ENCODE measurements at regions of chr2 and their contacts with region 1.

Region 1: GRCh38 chr2:45922571-45922988 is 271.1 kb downstream of the PRKCE start:
- DNase-seq: no peak
- ATAC-seq: no peak
- H3K4me3 ChIP-seq: no peak overlapping the region
- H3K27ac ChIP-seq: no peak overlapping the region
- H3K4me1 ChIP-seq: peaks cover 22% of the 10 kb centered on the region
- H3K27me3 ChIP-seq: no peaks in the 10 kb centered on the region
- CTCF ChIP-seq: no peak
- EP300 ChIP-seq: no peak
- POLR2A ChIP-seq: no peak
- RAD21 ChIP-seq: no peak

Region 2: GRCh38 chr2:45256867-45257641 is 665.5 kb before region 1 on chr2:
- CTCF ChIA-PET with region 1: no interaction called
- POLR2A ChIA-PET with region 1: no interaction called
- RAD21 ChIA-PET with region 1: no interaction called
- SMC1A ChIA-PET with region 1: no interaction called
- in situ Hi-C with region 1: no loop called
- intact Hi-C with region 1: no loop called
- DNase-seq: no peak
- ATAC-seq: no peak
- H3K4me3 ChIP-seq: no peak overlapping the region
- H3K27ac ChIP-seq: no peak overlapping the region
- H3K4me1 ChIP-seq: no peaks in the 10 kb centered on the region
- H3K27me3 ChIP-seq: no peaks in the 10 kb centered on the region; a peak in 3 of 4 replicates
- CTCF ChIP-seq: no peak
- EP300 ChIP-seq: no peak
- POLR2A ChIP-seq: no peak
- RAD21 ChIP-seq: no peak

Region 3: DNA sequence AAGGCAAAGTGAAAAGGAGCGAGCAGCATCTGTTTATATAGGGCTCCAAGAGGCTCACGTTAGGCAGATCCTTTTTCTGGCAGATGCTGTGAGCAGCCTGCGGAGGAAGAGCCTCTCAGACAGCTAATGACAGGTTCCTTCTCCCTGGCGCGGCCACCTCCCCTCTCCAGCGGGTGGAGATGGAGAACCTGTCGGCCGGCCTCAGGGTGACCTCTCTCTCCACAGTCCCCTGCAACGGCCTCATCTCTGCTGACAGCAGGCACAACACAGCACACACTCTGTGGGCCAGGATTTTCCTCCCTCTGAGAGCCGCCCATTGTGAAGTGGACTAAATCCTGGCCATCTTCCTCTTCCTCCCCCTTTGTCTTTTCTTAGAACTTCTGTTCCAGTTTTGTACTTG is 151.3 kb before region 1 on chr2:
- CTCF ChIA-PET with region 1: no interaction called
- POLR2A ChIA-PET with region 1: no interaction called
- RAD21 ChIA-PET with region 1: no interaction called
- SMC1A ChIA-PET with region 1: no interaction called
- in situ Hi-C with region 1: no loop called
- intact Hi-C with region 1: no loop called
- DNase-seq: no peak
- ATAC-seq: no peak
- H3K4me3 ChIP-seq: no peak overlapping the region
- H3K27ac ChIP-seq: no peak overlapping the region
- H3K4me1 ChIP-seq: no peaks in the 10 kb centered on the region; the same call in 1 of the 2 replicates
- H3K27me3 ChIP-seq: no peaks in the 10 kb centered on the region
- CTCF ChIP-seq: no peak
- EP300 ChIP-seq: no peak
- POLR2A ChIP-seq: no peak
- RAD21 ChIP-seq: no peak

Region 4: GRCh38 chr2:45843136-45843535 is 79.4 kb before region 1 on chr2:
- CTCF ChIA-PET with region 1: interaction called, 7 read pairs
- POLR2A ChIA-PET with region 1: interaction called, 5 read pairs
- RAD21 ChIA-PET with region 1: interaction called, 5 read pairs
- SMC1A ChIA-PET with region 1: interaction called, 17 read pairs
- in situ Hi-C with region 1: no loop called
- intact Hi-C with region 1: no loop called
- DNase-seq: no peak
- ATAC-seq: peak; percentile 76
- H3K4me3 ChIP-seq: peak overlapping the region; percentile 35; the same call in 1 of the 2 replicates
- H3K27ac ChIP-seq: peak overlapping the region; percentile 94
- H3K4me1 ChIP-seq: peaks cover 70% of the 10 kb centered on the region
- H3K27me3 ChIP-seq: no peaks in the 10 kb centered on the region
- CTCF ChIP-seq: no peak
- EP300 ChIP-seq: peak; percentile 91 to 97
- POLR2A ChIP-seq: no peak
- RAD21 ChIP-seq: no peak

Region 5: GRCh38 chr2:45860136-45861121 is 62.2 kb before region 1 on chr2:
- CTCF ChIA-PET with region 1: interaction called, 3 read pairs
- POLR2A ChIA-PET with region 1: interaction called, 3 read pairs
- RAD21 ChIA-PET with region 1: interaction called, 5 read pairs
- SMC1A ChIA-PET with region 1: interaction called, 21 read pairs
- in situ Hi-C with region 1: no loop called
- intact Hi-C with region 1: no loop called
- DNase-seq: no peak
- ATAC-seq: peak; percentile 81
- H3K4me3 ChIP-seq: peak overlapping the region; percentile 60
- H3K27ac ChIP-seq: peak overlapping the region; percentile 76
- H3K4me1 ChIP-seq: peaks cover 28% of the 10 kb centered on the region
- H3K27me3 ChIP-seq: no peaks in the 10 kb centered on the region
- CTCF ChIP-seq: no peak; a peak in 1 of 6 replicates
- EP300 ChIP-seq: peak in 1 of 2 experiments; percentile 21; a peak in 1 of 4 replicates
- POLR2A ChIP-seq: no peak
- RAD21 ChIP-seq: 0 out of 2 replicates have a peak, but pooled peaks have one; percentile 6

Region 6: GRCh38 chr2:45889053-45889452 is 33.5 kb before region 1 on chr2:
- CTCF ChIA-PET with region 1: interaction called, 4 read pairs
- POLR2A ChIA-PET with region 1: interaction called, 7 read pairs
- RAD21 ChIA-PET with region 1: interaction called, 26 read pairs
- SMC1A ChIA-PET with region 1: interaction called, 17 read pairs
- in situ Hi-C with region 1: no loop called
- intact Hi-C with region 1: no loop called
- DNase-seq: peak; percentile 73
- ATAC-seq: peak; percentile 96
- H3K4me3 ChIP-seq: no peak overlapping the region
- H3K27ac ChIP-seq: peak overlapping the region; percentile 85
- H3K4me1 ChIP-seq: peaks cover 54% of the 10 kb centered on the region
- H3K27me3 ChIP-seq: no peaks in the 10 kb centered on the region
- CTCF ChIP-seq: peak; percentile 31 to 63 (median 51); a peak in 4 of 6 replicates
- EP300 ChIP-seq: peak in 1 of 2 experiments; percentile 47; a peak in 1 of 4 replicates
- POLR2A ChIP-seq: 0 out of 2 replicates have a peak, but pooled peaks have one; percentile 29
- RAD21 ChIP-seq: peak; percentile 13; the same call in 1 of the 2 replicates

Region 7: GRCh38 chr2:45909663-45910191 is 12.9 kb before region 1 on chr2:
- CTCF ChIA-PET with region 1: interaction called, 4 read pairs
- POLR2A ChIA-PET with region 1: interaction called, 8 read pairs
- RAD21 ChIA-PET with region 1: interaction called, 10 read pairs
- SMC1A ChIA-PET with region 1: interaction called, 31 read pairs
- in situ Hi-C with region 1: no loop called
- intact Hi-C with region 1: no loop called
- DNase-seq: no peak
- ATAC-seq: peak; percentile 90
- H3K4me3 ChIP-seq: peak overlapping the region; percentile 13; the same call in 1 of the 2 replicates
- H3K27ac ChIP-seq: peak overlapping the region; percentile 66
- H3K4me1 ChIP-seq: peaks cover 35% of the 10 kb centered on the region
- H3K27me3 ChIP-seq: no peaks in the 10 kb centered on the region
- CTCF ChIP-seq: no peak
- EP300 ChIP-seq: peak; percentile 31 to 38; a peak in 2 of 4 replicates
- POLR2A ChIP-seq: no peak
- RAD21 ChIP-seq: 0 out of 2 replicates have a peak, but pooled peaks have one; percentile 18

Measured in GM12878 (cell line).